Lower leg skin (tissue), 4 donors: ENCODE measurements at regions of chr18 and their contacts with region 1.

Region 1: DNA sequence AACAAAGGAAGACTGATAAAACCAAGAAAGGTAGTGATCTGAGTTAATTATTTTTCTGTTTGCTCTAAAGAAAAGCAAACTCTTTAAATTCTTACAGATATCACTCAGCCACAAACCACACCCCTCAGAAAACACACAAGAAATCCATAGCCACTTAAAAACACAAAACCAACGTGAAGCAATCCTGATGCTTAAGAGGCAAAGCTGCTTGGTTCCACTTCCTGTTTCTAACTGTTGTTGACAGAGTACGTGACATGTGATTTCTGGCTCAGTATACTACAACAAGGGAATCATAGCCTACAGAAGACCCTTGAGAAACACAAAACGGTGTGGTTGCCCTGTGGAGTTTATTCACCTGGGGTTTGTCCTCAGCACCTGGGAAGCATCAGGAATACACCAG is 240.9 kb upstream of the APCDD1 start:
- DNase-seq: no peak
- H3K4me3 ChIP-seq: no peak overlapping the region
- CTCF ChIP-seq: no peak
- POLR2A ChIP-seq: no peak

Region 2: GRCh38 chr18:8290435-8290834 is 1923.1 kb before region 1 on chr18:
- intact Hi-C with region 1: loop called (anchors 5 kb)
- DNase-seq: no peak
- H3K4me3 ChIP-seq: no peak overlapping the region
- CTCF ChIP-seq: no peak
- POLR2A ChIP-seq: no peak

Region 3: DNA sequence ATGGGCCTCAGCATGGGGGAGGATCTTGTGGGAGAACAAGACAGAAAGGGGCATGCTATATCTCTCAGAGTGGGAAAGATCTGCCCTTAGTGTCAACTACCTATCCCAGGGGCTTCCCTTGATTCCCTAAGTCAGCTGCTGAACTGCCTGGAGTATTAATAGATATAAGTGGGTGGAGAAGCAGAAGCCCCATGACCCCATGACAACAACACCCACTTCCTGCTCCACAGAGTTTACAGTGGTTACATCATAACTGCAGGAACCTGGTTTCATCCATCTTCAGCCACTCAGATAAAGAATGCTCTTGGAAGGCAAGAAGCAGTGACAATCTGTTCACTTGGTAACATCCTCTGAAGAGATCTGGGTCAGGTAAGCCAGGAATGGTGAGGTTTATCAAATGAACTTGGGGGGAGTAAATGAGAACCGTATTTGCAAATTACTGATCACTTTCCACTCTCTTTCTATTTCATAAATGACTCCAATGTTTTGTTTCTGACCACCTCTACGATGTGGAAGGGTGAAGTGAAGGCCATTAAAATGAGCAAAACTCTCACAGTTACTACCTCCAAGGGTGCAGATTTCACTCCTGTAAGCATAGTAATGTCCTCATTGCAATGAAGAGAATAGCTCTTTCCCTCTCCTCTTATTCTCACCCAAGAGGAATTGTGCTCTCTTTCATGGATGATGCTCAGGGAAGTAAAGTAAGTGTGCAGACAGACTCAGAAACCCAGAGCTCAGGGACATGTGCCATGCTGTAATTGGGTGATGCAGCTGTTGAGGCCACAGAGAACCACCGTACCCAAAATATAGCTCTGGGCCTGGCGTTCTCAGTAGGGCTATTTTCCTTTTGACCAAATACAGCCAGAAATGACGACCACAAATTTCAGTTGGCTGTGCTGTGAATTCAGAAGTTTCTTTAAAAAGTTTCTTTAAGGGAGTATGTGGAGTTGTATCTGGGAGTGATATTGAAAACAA is 48.1 kb after region 1 on chr18:
- intact Hi-C with region 1: loop called (anchors 2 kb)
- DNase-seq: no peak
- H3K4me3 ChIP-seq: no peak overlapping the region
- CTCF ChIP-seq: no peak
- POLR2A ChIP-seq: no peak